ENCODE measurements at regions of chr3 and their contacts with region 1.

Region 1: GRCh38 chr3:64030741-64031140 is 7.4 kb upstream of the PSMD6 start:
- DNase-seq: peak; percentile 85
- ATAC-seq: peak; percentile 89

Region 2: GRCh38 chr3:64163755-64164148 is 133.0 kb after region 1 on chr3:
- intact Hi-C with region 1: loop called (anchors 10 kb)
- DNase-seq: no peak
- ATAC-seq: peak; percentile 11

Region 3: GRCh38 chr3:64489361-64490044 is 458.8 kb after region 1 on chr3:
- intact Hi-C with region 1: loop called (anchors 5 kb)
- DNase-seq: no peak
- ATAC-seq: peak; percentile 79